Naive thymus-derived CD4-positive, alpha-beta T cell (primary cell): ENCODE measurements at regions of chr18 and their contacts with region 1.

Region 1: DNA sequence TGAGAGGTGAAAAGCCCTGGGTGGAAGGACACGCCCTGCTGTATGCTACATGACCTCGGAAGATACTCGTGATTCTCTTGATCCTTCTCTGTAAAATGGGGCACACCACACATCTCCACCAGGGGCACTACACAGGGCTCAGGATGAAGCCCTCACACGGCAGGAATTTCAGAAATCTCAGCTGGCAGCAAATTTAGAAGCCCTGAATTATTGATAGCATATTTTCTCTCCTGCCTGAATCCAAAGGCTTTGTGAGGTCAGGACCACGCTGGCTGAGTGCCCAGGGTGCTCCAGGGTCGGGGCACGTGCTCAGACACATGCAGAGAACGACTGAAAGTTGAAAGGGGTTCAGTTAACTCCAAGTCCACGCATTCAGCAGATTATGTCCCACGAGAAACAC is 42.1 kb upstream of the GALR1 start:
- DNase-seq: peak in 7 of 9 donors; percentile 53 to 74 (median 62)
- ATAC-seq: peak; percentile 91
- H3K4me3 ChIP-seq: no peak overlapping the region
- H3K4me3 Mint-ChIP-seq: peak overlapping the region; percentile 54 to 99 (median 72)
- H3K27ac ChIP-seq: no peak overlapping the region
- H3K27ac Mint-ChIP-seq: peak overlapping the region; percentile 37 to 99 (median 70)
- H3K4me1 ChIP-seq: peaks cover 23 to 33% of the 10 kb centered on the region in 2 donors
- H3K4me1 Mint-ChIP-seq: peaks cover 24 to 55% (median 47%) of the 10 kb centered on the region in 7 donors
- H3K27me3 ChIP-seq: no peaks in the 10 kb centered on the region
- H3K27me3 Mint-ChIP-seq: peaks cover 0 to 9% (median 0%) of the 10 kb centered on the region in 5 donors

Region 2: GRCh38 chr18:76922107-76922506 is 285.4 kb before region 1 on chr18:
- CTCF ChIA-PET with region 1: interaction called, 11 read pairs
- POLR2A ChIA-PET with region 1: no interaction called
- intact Hi-C with region 1: loop called (anchors 1 kb)
- DNase-seq: peak in 8 of 9 donors; percentile 40 to 72 (median 62)
- ATAC-seq: peak; percentile 98
- H3K4me3 ChIP-seq: no peak overlapping the region
- H3K4me3 Mint-ChIP-seq: peak overlapping the region in 1 of 10 donors; percentile 50
- H3K27ac ChIP-seq: no peak overlapping the region
- H3K27ac Mint-ChIP-seq: peak overlapping the region in 7 of 9 donors; percentile 1 to 78 (median 49)
- H3K4me1 ChIP-seq: no peaks in the 10 kb centered on the region
- H3K4me1 Mint-ChIP-seq: peaks cover 14 to 21% (median 18%) of the 10 kb centered on the region in 7 donors
- H3K27me3 ChIP-seq: no peaks in the 10 kb centered on the region
- H3K27me3 Mint-ChIP-seq: no peaks in the 10 kb centered on the region

Region 3: GRCh38 chr18:77000527-77000926 is 207.0 kb before region 1 on chr18:
- CTCF ChIA-PET with region 1: interaction called, 85 read pairs
- POLR2A ChIA-PET with region 1: interaction called, 3 read pairs
- intact Hi-C with region 1: loop called (anchors 1 kb)
- DNase-seq: peak in 7 of 9 donors; percentile 29 to 64 (median 50)
- ATAC-seq: peak; percentile 68
- H3K4me3 ChIP-seq: no peak overlapping the region
- H3K4me3 Mint-ChIP-seq: no peak overlapping the region
- H3K27ac ChIP-seq: no peak overlapping the region
- H3K27ac Mint-ChIP-seq: peak overlapping the region in 2 of 9 donors; percentile 11 to 41
- H3K4me1 ChIP-seq: peaks cover 7 to 10% of the 10 kb centered on the region in 2 donors
- H3K4me1 Mint-ChIP-seq: peaks cover 13 to 30% (median 28%) of the 10 kb centered on the region in 7 donors
- H3K27me3 ChIP-seq: no peaks in the 10 kb centered on the region
- H3K27me3 Mint-ChIP-seq: peaks cover 0 to 4% (median 0%) of the 10 kb centered on the region in 5 donors

Region 4: DNA sequence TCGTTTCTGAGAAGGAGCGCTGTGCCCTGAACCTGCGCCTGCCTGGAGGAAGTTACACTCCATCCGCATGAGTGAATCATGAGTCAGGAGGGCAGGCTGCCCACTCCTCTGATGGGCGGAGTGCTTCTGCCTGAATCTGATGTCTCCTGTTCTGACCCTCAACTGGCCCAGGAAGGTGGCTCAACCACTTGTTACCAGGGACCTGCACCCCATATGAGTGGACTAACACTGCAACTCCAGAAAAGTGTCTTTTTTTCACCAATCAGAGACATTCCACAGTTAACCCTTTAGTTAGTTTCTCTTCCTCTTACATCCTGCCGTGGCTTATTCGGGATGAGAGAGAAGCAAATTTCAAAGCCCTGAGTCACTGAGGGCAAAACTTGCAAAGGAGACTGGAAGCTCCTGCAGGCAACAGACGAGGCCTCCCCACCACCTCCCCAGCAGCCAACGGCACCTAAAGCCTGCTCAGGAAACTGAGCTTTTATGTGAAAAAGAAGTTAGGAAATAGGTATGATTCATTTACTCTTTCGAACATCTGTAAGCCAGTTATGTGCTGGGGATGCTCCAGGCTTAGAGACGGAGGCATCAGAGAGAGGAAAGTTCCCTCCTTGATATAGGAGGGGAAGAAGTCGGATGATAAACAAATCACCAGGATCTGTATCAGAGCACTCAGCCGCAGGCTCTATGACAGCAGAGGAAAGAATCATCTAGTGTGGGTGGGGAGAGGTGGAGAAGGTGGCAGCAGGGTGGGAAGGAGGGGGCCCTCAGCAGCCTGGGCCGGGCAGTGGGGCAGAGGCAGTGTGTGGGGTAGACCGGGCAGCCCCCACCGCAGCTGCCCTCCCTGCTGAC is 105.9 kb before region 1 on chr18:
- CTCF ChIA-PET with region 1: interaction called, 7 read pairs
- POLR2A ChIA-PET with region 1: interaction called, 5 read pairs
- intact Hi-C with region 1: loop called (anchors 1 to 2 kb)
- DNase-seq: peak in 2 of 9 donors; percentile 26 to 73
- ATAC-seq: peak; percentile 62
- H3K4me3 ChIP-seq: peak overlapping the region; percentile 45
- H3K4me3 Mint-ChIP-seq: peak overlapping the region; percentile 65 to 92 (median 82)
- H3K27ac ChIP-seq: peak overlapping the region; percentile 73
- H3K27ac Mint-ChIP-seq: peak overlapping the region; percentile 94 to 99 (median 98)
- H3K4me1 ChIP-seq: peaks cover 88 to 94% of the 10 kb centered on the region in 2 donors
- H3K4me1 Mint-ChIP-seq: peaks cover 71 to 100% (median 94%) of the 10 kb centered on the region in 7 donors
- H3K27me3 ChIP-seq: no peaks in the 10 kb centered on the region
- H3K27me3 Mint-ChIP-seq: no peaks in the 10 kb centered on the region

Region 5: DNA sequence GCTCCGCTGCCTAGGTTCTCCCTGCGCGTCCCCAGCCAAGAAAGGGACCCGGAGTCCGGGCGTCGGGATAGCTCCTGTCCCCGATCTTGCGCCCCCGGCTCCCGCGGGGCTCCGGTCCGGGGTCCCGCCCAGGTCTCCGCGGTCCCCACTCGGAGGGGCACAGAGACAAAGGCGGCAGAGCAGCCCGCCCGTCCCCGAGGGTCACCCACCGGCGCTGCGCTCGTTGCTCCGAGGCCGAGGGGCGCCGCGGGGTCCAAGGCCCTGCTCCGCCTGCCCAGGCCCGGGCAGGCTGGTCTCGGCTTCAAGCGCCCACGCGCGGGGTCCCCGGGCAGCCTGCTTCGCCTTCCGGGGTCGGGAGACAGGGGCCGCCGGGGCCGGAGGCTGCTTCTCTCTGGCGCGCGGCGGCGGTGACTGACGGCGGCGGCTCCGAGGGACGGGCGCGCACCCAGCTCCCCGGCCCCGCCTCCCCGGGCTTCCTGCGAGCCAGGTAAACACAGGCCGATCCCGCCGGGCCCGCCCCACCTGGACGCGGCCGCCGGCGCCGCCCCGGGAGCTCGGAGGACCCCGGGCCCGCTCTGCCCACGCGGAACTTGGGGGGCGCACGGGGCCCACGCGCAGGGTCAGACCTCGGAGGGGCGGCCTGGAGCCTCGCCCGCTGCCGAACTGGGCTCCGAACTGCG is 75.0 kb before region 1 on chr18 and contains the start of gene MBP:
- CTCF ChIA-PET with region 1: interaction called, 4 read pairs
- POLR2A ChIA-PET with region 1: interaction called, 6 read pairs
- intact Hi-C with region 1: loop called (anchors 1 to 2 kb)
- DNase-seq: peak; percentile 58 to 75 (median 68)
- ATAC-seq: peak; percentile 49
- H3K4me3 ChIP-seq: peak within 1 kb of the TSS; percentile 66
- H3K4me3 Mint-ChIP-seq: peak within 1 kb of the TSS; percentile 94 to 100 (median 97)
- H3K27ac ChIP-seq: peak within 1 kb of the TSS; percentile 87
- H3K27ac Mint-ChIP-seq: peak within 1 kb of the TSS; percentile 76 to 97 (median 96)
- H3K4me1 ChIP-seq: peaks cover 34 to 47% of the 10 kb centered on the region in 2 donors
- H3K4me1 Mint-ChIP-seq: peaks cover 43 to 66% (median 59%) of the 10 kb centered on the region in 7 donors
- H3K27me3 ChIP-seq: no peaks in the 10 kb centered on the region
- H3K27me3 Mint-ChIP-seq: no peaks in the 10 kb centered on the region
- total RNA-seq, gene MBP: 88.3 to 152 (median 116) TPM